MCF 10A (cell line): ENCODE measurements at regions of chr17 and their contacts with region 1.

Region 1: GRCh38 chr17:55421179-55421934 is at the start of gene MMD:
- DNase-seq: peak; percentile 45
- H3K4me3 Mint-ChIP-seq: peak within 1 kb of the TSS; percentile 84
- H3K27ac Mint-ChIP-seq: peak within 1 kb of the TSS; percentile 39
- H3K4me1 Mint-ChIP-seq: peaks cover 6% of the 10 kb centered on the region
- H3K27me3 Mint-ChIP-seq: peaks cover 26% of the 10 kb centered on the region
- CTCF ChIP-seq: no peak
- total RNA-seq, gene MMD: 4.5 and 5.9 TPM in 2 replicates

Region 2: DNA sequence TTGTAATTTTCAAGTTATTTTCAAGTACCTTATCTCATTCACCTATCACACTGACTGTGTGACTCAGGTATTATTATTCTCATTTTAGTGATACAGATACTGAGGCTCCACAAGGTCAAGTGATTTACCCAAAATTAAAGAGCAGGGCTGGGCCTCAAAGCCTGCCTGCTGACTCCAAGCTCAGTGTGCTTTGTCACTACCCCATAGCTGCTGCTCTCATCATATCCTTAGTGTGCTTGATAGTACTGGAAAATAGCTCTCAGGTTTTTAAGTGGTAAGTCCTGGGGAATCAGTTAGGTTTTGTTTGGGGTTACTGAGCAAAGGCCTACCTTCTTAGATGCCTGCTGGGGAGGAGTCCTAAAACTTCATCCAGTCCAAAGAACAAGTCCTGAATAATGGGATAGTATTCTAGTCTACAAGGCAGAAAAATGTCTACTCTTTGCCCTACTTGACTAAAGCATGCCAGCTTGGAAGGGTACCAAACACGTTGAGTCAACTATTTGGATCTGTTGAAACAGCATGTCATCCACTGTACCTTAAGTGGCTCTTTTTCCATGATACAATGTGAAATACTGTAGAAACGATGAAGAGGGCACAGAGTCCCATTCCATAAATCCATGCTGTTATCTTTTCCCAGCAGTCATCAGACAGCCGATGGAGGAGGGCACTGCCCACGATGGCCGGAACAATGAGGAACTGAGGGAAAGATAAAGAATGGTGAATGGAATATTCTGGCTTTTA is 10.5 kb before region 1 on chr17:
- CTCF ChIA-PET with region 1: no interaction called
- POLR2A ChIA-PET with region 1: interaction called, 10 read pairs
- intact Hi-C with region 1: no loop called
- DNase-seq: peak; percentile 73
- H3K4me3 Mint-ChIP-seq: no peak overlapping the region
- H3K27ac Mint-ChIP-seq: peak overlapping the region; percentile 35
- H3K4me1 Mint-ChIP-seq: peaks cover 6% of the 10 kb centered on the region
- H3K27me3 Mint-ChIP-seq: no peaks in the 10 kb centered on the region
- CTCF ChIP-seq: no peak

Region 3: GRCh38 chr17:55433629-55434305 is 12.4 kb after region 1 on chr17:
- CTCF ChIA-PET with region 1: interaction called, 4 read pairs
- POLR2A ChIA-PET with region 1: interaction called, 41 read pairs
- intact Hi-C with region 1: no loop called
- DNase-seq: peak; percentile 95
- H3K4me3 Mint-ChIP-seq: peak overlapping the region; percentile 30
- H3K27ac Mint-ChIP-seq: peak overlapping the region; percentile 96
- H3K4me1 Mint-ChIP-seq: peaks cover 44% of the 10 kb centered on the region
- H3K27me3 Mint-ChIP-seq: no peaks in the 10 kb centered on the region
- CTCF ChIP-seq: no peak

Region 4: DNA sequence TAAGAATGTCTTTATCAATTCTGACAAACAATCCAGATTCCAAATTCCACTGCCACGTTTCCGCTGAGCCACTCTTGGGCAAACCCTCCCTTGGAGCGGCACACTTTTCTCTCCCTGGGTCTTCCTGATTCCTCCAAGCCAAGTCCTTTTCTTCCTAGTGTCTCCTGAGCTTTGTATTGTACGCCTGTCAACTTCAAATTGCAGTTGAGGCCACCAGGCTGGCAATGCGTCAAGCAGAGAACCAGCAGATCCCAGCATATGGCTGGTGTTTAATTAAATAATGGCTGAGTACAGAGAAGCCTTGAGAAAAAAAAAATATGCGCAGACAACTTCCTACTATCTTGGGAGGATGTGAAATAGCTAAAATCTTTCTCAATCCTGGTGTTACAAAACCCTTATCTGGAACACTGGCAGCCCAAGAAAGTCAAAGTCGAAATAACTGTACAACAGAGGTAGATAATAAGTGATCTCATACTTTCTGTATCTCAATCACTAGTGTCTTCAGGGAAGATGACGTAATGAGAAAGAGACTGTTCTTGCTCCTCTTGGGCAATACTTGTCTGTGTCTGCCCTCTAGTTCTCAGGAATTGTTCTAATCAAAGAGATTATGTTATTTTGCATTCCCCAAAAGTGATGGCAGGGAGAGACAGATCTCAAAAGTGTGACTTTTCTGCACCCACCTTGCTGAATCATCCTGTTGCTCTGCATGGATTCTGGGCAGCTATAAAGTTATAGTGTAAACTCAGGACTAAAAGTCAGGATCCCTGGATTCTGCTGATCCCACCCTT is 74.9 kb after region 1 on chr17:
- CTCF ChIA-PET with region 1: interaction called, 3 read pairs
- POLR2A ChIA-PET with region 1: no interaction called
- intact Hi-C with region 1: loop called (anchors 5 kb)
- DNase-seq: peak; percentile 56
- H3K4me3 Mint-ChIP-seq: no peak overlapping the region
- H3K27ac Mint-ChIP-seq: no peak overlapping the region
- H3K4me1 Mint-ChIP-seq: peaks cover 15% of the 10 kb centered on the region
- H3K27me3 Mint-ChIP-seq: no peaks in the 10 kb centered on the region
- CTCF ChIP-seq: no peak